Activated B cell treated with CpG ODN at 0.5 μM for 24 hours (primary cell): ENCODE measurements at regions of chr3 and their contacts with region 1.

Region 1: GRCh38 chr3:159988617-159989271 is at the start of gene IL12A:
- DNase-seq: peak; percentile 90
- ATAC-seq: peak; percentile 94
- H3K4me3 Mint-ChIP-seq: peak within 1 kb of the TSS; percentile 90
- H3K27ac Mint-ChIP-seq: peak within 1 kb of the TSS; percentile 80
- H3K4me1 Mint-ChIP-seq: peaks cover 53% of the 10 kb centered on the region
- H3K27me3 Mint-ChIP-seq: no peaks in the 10 kb centered on the region
- CTCF ChIP-seq: peak; percentile 90
- total RNA-seq, gene IL12A: 7.0 and 7.8 TPM in 2 replicates

Region 2: DNA sequence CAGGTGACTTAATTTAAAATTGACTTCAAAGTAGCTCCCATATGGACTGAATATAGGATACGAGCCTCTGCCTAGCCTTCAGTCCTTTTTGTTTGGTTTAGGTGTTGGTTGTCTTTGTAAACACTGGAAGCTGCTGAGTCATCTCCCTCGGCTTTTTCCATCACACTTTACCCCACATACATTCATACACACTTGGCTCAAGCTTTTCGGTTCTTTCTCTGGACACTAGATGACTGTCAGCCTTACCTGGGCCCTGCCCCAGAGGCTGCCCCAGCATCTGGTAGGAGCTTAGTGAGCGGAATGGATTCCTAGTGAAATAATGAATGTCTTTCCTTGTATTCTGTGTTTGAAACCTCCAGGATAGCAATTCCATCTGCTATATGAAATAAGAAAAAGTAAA is 201.6 kb before region 1 on chr3:
- CTCF ChIA-PET with region 1: no interaction called
- POLR2A ChIA-PET with region 1: no interaction called
- intact Hi-C with region 1: no loop called
- DNase-seq: no peak
- ATAC-seq: no peak
- H3K4me3 Mint-ChIP-seq: no peak overlapping the region
- H3K27ac Mint-ChIP-seq: no peak overlapping the region
- H3K4me1 Mint-ChIP-seq: no peaks in the 10 kb centered on the region
- H3K27me3 Mint-ChIP-seq: peaks cover 6% of the 10 kb centered on the region
- CTCF ChIP-seq: no peak

Region 3: DNA sequence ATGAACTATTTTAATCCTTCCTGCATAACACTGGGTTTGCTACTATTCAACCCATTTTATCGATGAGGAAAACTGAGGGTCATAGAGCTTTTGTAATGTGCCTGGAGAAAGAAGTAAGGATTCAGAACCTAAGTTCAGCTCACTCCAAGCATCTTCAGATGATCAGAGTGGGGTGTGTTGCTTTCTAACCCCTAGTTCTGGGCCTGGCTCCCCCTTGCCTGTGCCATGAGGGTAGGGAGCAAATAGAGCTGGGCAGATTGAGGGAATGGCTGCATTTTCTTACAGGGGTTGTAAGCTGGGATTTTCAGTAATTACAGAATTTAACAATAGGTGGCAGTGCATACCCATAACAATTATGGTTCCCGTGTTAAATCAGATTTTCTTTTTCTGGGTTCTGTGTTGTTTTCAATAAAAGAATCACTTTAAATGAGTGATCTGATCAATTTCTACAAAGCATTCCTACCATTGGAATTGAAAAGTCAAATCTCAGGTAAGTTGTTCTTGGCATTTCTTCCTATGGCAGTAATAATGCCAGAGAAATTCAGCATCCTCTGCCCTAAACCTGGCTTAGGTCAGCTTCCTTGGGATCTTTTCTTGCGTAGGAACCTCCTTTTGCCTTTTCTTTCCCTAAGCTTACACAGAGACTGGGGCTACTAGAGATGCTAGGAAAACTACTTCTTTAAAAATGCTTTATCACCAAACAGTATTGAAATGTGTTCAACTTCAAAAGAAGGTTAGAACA is 103.9 kb before region 1 on chr3:
- CTCF ChIA-PET with region 1: interaction called, 83 read pairs
- POLR2A ChIA-PET with region 1: interaction called, 13 read pairs
- intact Hi-C with region 1: loop called (anchors 1 kb)
- DNase-seq: no peak
- ATAC-seq: peak; percentile 57
- H3K4me3 Mint-ChIP-seq: no peak overlapping the region
- H3K27ac Mint-ChIP-seq: no peak overlapping the region
- H3K4me1 Mint-ChIP-seq: no peaks in the 10 kb centered on the region
- H3K27me3 Mint-ChIP-seq: no peaks in the 10 kb centered on the region
- CTCF ChIP-seq: no peak

Region 4: GRCh38 chr3:159964166-159964973 is 24.4 kb before region 1 on chr3:
- CTCF ChIA-PET with region 1: interaction called, 6 read pairs
- POLR2A ChIA-PET with region 1: interaction called, 17 read pairs
- intact Hi-C with region 1: loop called (anchors 1 kb)
- DNase-seq: no peak
- ATAC-seq: peak; percentile 89
- H3K4me3 Mint-ChIP-seq: peak overlapping the region; percentile 66
- H3K27ac Mint-ChIP-seq: peak overlapping the region; percentile 90
- H3K4me1 Mint-ChIP-seq: peaks cover 15% of the 10 kb centered on the region
- H3K27me3 Mint-ChIP-seq: no peaks in the 10 kb centered on the region
- CTCF ChIP-seq: no peak

Region 5: GRCh38 chr3:160012108-160012507 is 23.4 kb after region 1 on chr3:
- CTCF ChIA-PET with region 1: interaction called, 7 read pairs
- POLR2A ChIA-PET with region 1: interaction called, 4 read pairs
- intact Hi-C with region 1: loop called (anchors 1 kb)
- DNase-seq: no peak
- ATAC-seq: peak; percentile 88
- H3K4me3 Mint-ChIP-seq: peak overlapping the region; percentile 25
- H3K27ac Mint-ChIP-seq: peak overlapping the region; percentile 83
- H3K4me1 Mint-ChIP-seq: peaks cover 42% of the 10 kb centered on the region
- H3K27me3 Mint-ChIP-seq: no peaks in the 10 kb centered on the region
- CTCF ChIP-seq: no peak

Region 6: GRCh38 chr3:160399125-160400029 is 410.6 kb after region 1 on chr3 and contains the starts of genes IFT80 and SMC4:
- CTCF ChIA-PET with region 1: no interaction called
- POLR2A ChIA-PET with region 1: no interaction called
- intact Hi-C with region 1: loop called (anchors 1 kb)
- DNase-seq: peak; percentile 90
- ATAC-seq: peak; percentile 95
- H3K4me3 Mint-ChIP-seq: peak within 1 kb of the TSS; percentile 97
- H3K27ac Mint-ChIP-seq: peak within 1 kb of the TSS; percentile 99
- H3K4me1 Mint-ChIP-seq: peaks cover 47% of the 10 kb centered on the region
- H3K27me3 Mint-ChIP-seq: peaks cover 2% of the 10 kb centered on the region
- CTCF ChIP-seq: no peak
- total RNA-seq, gene IFT80: 20.8 and 26.7 TPM in 2 replicates
- total RNA-seq, gene SMC4: 35.2 and 40.4 TPM in 2 replicates

Region 7: GRCh38 chr3:160565442-160566403 is 577.0 kb after region 1 on chr3 and contains the start of gene KPNA4:
- CTCF ChIA-PET with region 1: no interaction called
- POLR2A ChIA-PET with region 1: no interaction called
- intact Hi-C with region 1: loop called (anchors 2 kb)
- DNase-seq: peak; percentile 95
- ATAC-seq: peak; percentile 88
- H3K4me3 Mint-ChIP-seq: peak within 1 kb of the TSS; percentile 95
- H3K27ac Mint-ChIP-seq: peak within 1 kb of the TSS; percentile 94
- H3K4me1 Mint-ChIP-seq: peaks cover 53% of the 10 kb centered on the region
- H3K27me3 Mint-ChIP-seq: no peaks in the 10 kb centered on the region
- CTCF ChIP-seq: no peak
- total RNA-seq, gene KPNA4: 43.4 and 46.7 TPM in 2 replicates